ENCODE measurements at regions of chrX and their contacts with region 1.

Region 1: GRCh38 chrX:39242187-39242586 is 440.9 kb downstream of the MID1IP1 start:
- DNase-seq: no peak
- ATAC-seq: peak; percentile 89
- H3K4me3 ChIP-seq: no peak overlapping the region
- H3K27ac ChIP-seq: no peak overlapping the region
- H3K4me1 ChIP-seq: peaks cover 4% of the 10 kb centered on the region; the same call in 1 of the 2 replicates
- H3K27me3 ChIP-seq: no peaks in the 10 kb centered on the region; a peak in 1 of 4 replicates
- CTCF ChIP-seq: peak; percentile 51 to 55 (median 54)
- EP300 ChIP-seq: no peak
- POLR2A ChIP-seq: no peak
- RAD21 ChIP-seq: peak; percentile 55

Region 2: GRCh38 chrX:38768079-38768478 is 474.1 kb before region 1 on chrX:
- CTCF ChIA-PET with region 1: interaction called, 12 read pairs
- POLR2A ChIA-PET with region 1: no interaction called
- RAD21 ChIA-PET with region 1: interaction called, 3 read pairs
- SMC1A ChIA-PET with region 1: interaction called, 6 read pairs
- in situ Hi-C with region 1: no loop called
- intact Hi-C with region 1: loop called (anchors 1 kb)
- DNase-seq: no peak
- ATAC-seq: peak; percentile 62
- H3K4me3 ChIP-seq: no peak overlapping the region
- H3K27ac ChIP-seq: no peak overlapping the region
- H3K4me1 ChIP-seq: no peaks in the 10 kb centered on the region
- H3K27me3 ChIP-seq: no peaks in the 10 kb centered on the region
- CTCF ChIP-seq: peak; percentile 30 to 57 (median 31); a peak in 4 of 6 replicates
- EP300 ChIP-seq: no peak
- POLR2A ChIP-seq: no peak
- RAD21 ChIP-seq: peak; percentile 72

Region 3: GRCh38 chrX:39133971-39134370 is 108.2 kb before region 1 on chrX:
- CTCF ChIA-PET with region 1: interaction called, 35 read pairs
- POLR2A ChIA-PET with region 1: no interaction called
- RAD21 ChIA-PET with region 1: interaction called, 5 read pairs
- SMC1A ChIA-PET with region 1: interaction called, 18 read pairs
- in situ Hi-C with region 1: no loop called
- intact Hi-C with region 1: no loop called
- DNase-seq: no peak
- ATAC-seq: peak; percentile 91
- H3K4me3 ChIP-seq: no peak overlapping the region
- H3K27ac ChIP-seq: no peak overlapping the region
- H3K4me1 ChIP-seq: no peaks in the 10 kb centered on the region
- H3K27me3 ChIP-seq: no peaks in the 10 kb centered on the region
- CTCF ChIP-seq: peak; percentile 59 to 62 (median 59)
- EP300 ChIP-seq: no peak
- POLR2A ChIP-seq: no peak
- RAD21 ChIP-seq: peak; percentile 50

Region 4: GRCh38 chrX:39158801-39159657 is 83.2 kb before region 1 on chrX:
- CTCF ChIA-PET with region 1: interaction called, 53 read pairs
- POLR2A ChIA-PET with region 1: interaction called, 3 read pairs
- RAD21 ChIA-PET with region 1: interaction called, 39 read pairs
- SMC1A ChIA-PET with region 1: interaction called, 47 read pairs
- in situ Hi-C with region 1: no loop called
- intact Hi-C with region 1: loop called (anchors 5 kb)
- DNase-seq: peak; percentile 67
- ATAC-seq: peak; percentile 76
- H3K4me3 ChIP-seq: no peak overlapping the region
- H3K27ac ChIP-seq: peak overlapping the region; percentile 43; the same call in 1 of the 2 replicates
- H3K4me1 ChIP-seq: peaks cover 8% of the 10 kb centered on the region; the same call in 1 of the 2 replicates
- H3K27me3 ChIP-seq: no peaks in the 10 kb centered on the region
- CTCF ChIP-seq: no peak
- EP300 ChIP-seq: no peak
- POLR2A ChIP-seq: no peak
- RAD21 ChIP-seq: no peak

Region 5: DNA sequence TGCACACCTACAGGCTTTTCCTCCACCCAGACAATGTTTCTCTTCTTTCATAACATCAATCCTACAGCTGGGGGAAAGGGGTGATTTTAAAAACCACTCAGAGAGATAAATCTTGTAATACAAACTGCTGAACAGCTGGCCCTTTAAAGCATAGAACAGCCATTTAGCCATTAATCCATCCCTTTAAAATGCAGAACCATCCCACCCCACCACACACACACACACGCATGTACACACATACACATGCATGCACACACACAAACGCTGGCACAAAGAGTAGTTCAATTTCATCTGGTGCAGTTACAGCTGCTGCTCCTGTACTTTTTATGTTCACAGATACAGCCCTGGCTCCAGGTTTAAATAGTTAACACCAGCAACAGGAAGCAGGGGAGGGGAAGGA is 14.8 kb before region 1 on chrX:
- CTCF ChIA-PET with region 1: interaction called, 13 read pairs
- POLR2A ChIA-PET with region 1: no interaction called
- RAD21 ChIA-PET with region 1: no interaction called
- SMC1A ChIA-PET with region 1: interaction called, 3 read pairs
- in situ Hi-C with region 1: no loop called
- intact Hi-C with region 1: no loop called
- DNase-seq: no peak
- ATAC-seq: no peak
- H3K4me3 ChIP-seq: no peak overlapping the region
- H3K27ac ChIP-seq: no peak overlapping the region
- H3K4me1 ChIP-seq: no peaks in the 10 kb centered on the region
- H3K27me3 ChIP-seq: no peaks in the 10 kb centered on the region
- CTCF ChIP-seq: no peak
- EP300 ChIP-seq: no peak
- POLR2A ChIP-seq: no peak
- RAD21 ChIP-seq: no peak

Region 6: GRCh38 chrX:39336671-39337311 is 94.6 kb after region 1 on chrX:
- CTCF ChIA-PET with region 1: no interaction called
- POLR2A ChIA-PET with region 1: no interaction called
- RAD21 ChIA-PET with region 1: no interaction called
- SMC1A ChIA-PET with region 1: no interaction called
- in situ Hi-C with region 1: no loop called
- intact Hi-C with region 1: no loop called
- DNase-seq: peak; percentile 32
- ATAC-seq: peak; percentile 71
- H3K4me3 ChIP-seq: no peak overlapping the region
- H3K27ac ChIP-seq: no peak overlapping the region
- H3K4me1 ChIP-seq: no peaks in the 10 kb centered on the region; the same call in 1 of the 2 replicates
- H3K27me3 ChIP-seq: no peaks in the 10 kb centered on the region
- CTCF ChIP-seq: no peak
- EP300 ChIP-seq: no peak
- POLR2A ChIP-seq: no peak
- RAD21 ChIP-seq: no peak